ENCODE measurements at regions of chr16 and their contacts with region 1.

Region 1: DNA sequence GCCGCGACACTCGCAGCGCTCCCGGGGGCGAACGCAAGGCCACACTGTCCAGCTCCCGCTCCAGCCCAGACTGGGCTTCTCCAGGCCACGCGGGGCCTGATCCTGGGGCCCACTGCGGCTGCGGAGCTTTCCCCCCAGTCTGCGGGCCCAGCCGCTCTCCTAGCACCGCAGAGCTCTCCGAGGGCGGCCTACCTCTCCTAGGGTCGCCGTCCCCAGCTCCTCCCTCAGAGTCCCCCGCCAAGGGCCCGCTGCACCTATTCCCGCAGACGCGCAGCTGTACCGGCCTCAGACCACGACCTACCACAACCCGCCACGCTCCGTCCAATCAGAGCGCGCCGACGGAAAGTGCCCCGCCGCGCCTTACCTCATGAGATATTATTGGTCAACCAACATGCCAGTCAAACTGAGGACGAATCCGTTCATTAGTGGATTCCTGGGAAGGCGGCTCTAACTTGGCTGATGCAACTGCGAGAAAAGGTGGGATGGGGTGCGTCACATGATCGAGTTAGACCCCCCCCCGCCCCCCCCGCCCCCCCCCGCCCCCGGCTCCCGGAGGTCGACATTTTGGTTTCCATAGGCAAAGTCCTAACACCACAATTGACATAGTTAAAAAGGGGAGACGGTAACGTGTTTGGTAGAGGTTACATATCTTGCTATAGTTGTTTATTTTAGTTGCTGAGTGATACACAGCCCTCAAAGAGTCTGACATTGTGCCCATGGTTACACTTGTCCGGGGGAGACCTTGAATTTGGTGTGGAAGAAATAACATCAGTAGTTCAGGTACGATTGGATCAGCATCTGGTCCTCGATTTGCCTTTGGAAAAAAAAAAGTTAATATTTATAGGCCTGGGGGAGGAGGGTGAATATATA is at the start of gene AARS1:
- DNase-seq: peak; percentile 98
- H3K4me3 ChIP-seq: peak within 1 kb of the TSS; percentile 81
- H3K27ac ChIP-seq: peak within 1 kb of the TSS; percentile 92
- H3K4me1 ChIP-seq: peaks cover 2% of the 10 kb centered on the region
- H3K27me3 ChIP-seq: no peaks in the 10 kb centered on the region
- CTCF ChIP-seq: no peak
- total RNA-seq, gene AARS1: 45.3 to 97.8 TPM

Region 2: DNA sequence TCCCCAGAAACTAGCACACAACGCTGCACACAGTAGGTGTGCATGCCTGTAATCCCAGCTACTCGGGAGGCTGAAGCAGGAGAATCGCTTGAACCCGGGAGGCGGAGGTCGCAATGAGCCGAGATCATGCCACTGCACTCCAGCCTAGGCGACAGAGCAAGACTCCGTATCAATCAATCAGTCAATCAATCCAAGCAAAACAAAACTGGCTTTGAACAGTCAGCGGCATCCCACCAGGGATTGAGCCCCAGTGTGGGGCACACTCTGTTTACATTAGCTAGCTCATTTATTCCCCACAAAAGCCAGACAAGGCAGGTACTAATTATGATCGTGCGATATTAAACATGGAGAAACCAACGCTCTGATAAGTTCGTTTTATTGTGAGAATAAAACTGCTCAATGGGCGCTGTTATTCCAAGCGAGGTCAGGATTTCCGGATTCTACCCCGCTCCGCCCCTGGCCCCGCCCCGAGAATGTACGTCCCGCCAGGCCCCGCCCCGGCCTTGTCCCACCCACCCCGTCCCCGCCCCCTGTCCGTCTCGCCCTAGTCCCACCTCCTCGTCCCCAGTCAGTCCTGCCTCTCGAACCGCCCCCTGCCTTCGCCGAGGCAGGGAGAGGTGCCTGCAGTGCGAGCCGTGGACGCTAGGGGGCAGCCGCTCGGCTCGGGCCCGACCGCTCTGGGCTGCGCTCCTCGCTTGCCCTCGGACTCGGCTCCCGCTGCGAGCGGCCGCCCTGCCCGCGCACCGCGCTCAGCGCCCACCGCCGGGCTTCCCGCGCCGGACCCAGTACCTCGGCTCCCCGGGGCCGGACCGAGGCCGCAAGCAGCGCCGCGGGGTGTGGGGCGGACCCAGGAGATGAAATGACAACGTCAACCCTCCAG is 978.6 kb before region 1 on chr16 and contains the start of gene VPS4A:
- intact Hi-C with region 1: no loop called
- DNase-seq: peak; percentile 97
- H3K4me3 ChIP-seq: peak within 1 kb of the TSS; percentile 96
- H3K27ac ChIP-seq: peak within 1 kb of the TSS; percentile 90
- H3K4me1 ChIP-seq: peaks cover 5% of the 10 kb centered on the region
- H3K27me3 ChIP-seq: no peaks in the 10 kb centered on the region
- CTCF ChIP-seq: peak; percentile 84
- total RNA-seq, gene VPS4A: 32.0 to 33.6 TPM

Region 3: GRCh38 chr16:70348991-70349390 is 59.5 kb after region 1 on chr16:
- intact Hi-C with region 1: loop called (anchors 5 kb)
- DNase-seq: no peak
- H3K4me3 ChIP-seq: no peak overlapping the region
- H3K27ac ChIP-seq: no peak overlapping the region
- H3K4me1 ChIP-seq: peaks cover 7% of the 10 kb centered on the region
- H3K27me3 ChIP-seq: no peaks in the 10 kb centered on the region
- CTCF ChIP-seq: no peak